ENCODE measurements at regions of chr4 and their contacts with region 1.

Region 1: DNA sequence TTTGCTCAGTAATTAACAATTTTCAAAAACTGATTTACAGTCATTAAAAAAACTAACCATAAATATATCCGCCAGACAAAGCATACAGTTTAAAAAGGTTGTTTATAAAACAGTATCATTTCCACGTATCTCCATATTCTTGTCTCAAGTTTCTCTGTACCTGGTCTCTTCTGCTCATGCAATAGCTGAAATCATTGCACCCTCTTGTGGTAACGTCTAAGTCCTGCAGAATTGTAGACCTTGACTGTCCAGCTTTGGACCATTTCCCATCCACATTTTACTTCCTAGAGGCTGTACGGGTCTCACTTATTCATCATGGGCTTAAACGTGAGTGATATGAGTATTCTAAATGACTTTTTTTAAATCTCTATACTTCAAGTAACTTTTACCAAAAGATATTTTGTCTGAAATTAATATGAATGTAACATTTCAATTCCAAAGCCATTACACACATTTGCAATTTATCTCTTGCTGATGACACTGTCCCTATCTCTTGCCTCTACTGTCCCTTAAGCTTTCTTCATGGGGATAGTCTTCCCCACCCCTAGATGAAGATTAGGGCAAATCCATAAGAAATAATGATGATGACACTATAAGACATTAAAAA is 118.5 kb downstream of the BTC start:
- DNase-seq: no peak
- H3K4me3 Mint-ChIP-seq: no peak overlapping the region
- H3K27ac Mint-ChIP-seq: no peak overlapping the region
- H3K4me1 Mint-ChIP-seq: peaks cover 2% of the 10 kb centered on the region
- H3K27me3 Mint-ChIP-seq: peaks cover 6% of the 10 kb centered on the region

Region 2: GRCh38 chr4:74320559-74321118 is 355.1 kb before region 1 on chr4:
- intact Hi-C with region 1: loop called (anchors 2 kb)
- DNase-seq: no peak
- H3K4me3 Mint-ChIP-seq: no peak overlapping the region
- H3K27ac Mint-ChIP-seq: no peak overlapping the region
- H3K4me1 Mint-ChIP-seq: peaks cover 4% of the 10 kb centered on the region
- H3K27me3 Mint-ChIP-seq: peaks cover 32% of the 10 kb centered on the region

Region 3: DNA sequence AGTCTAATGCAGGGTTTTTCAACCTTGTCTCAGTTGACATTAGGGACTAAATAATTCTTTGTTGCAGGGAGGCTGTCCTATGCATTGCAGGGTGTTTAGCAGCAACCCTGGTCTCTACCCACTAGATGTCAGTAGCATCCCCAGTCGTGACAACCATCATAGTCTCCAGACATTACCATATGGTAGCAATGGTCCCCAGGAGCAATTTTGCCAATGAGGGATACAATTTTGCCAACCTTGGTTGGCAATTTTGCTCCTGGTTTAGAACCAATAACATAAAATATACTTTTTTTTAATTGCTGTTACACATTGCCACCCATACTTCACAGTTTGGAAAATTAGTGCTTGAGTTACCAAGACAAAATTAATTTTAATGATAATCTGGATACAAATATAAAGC is 304.9 kb before region 1 on chr4:
- intact Hi-C with region 1: loop called (anchors 1 kb)
- DNase-seq: no peak
- H3K4me3 Mint-ChIP-seq: no peak overlapping the region
- H3K27ac Mint-ChIP-seq: no peak overlapping the region
- H3K4me1 Mint-ChIP-seq: peaks cover 6% of the 10 kb centered on the region
- H3K27me3 Mint-ChIP-seq: peaks cover 22% of the 10 kb centered on the region

Region 4: GRCh38 chr4:74623041-74623440 is 52.7 kb before region 1 on chr4:
- intact Hi-C with region 1: loop called (anchors 5 kb)
- DNase-seq: no peak
- H3K4me3 Mint-ChIP-seq: no peak overlapping the region
- H3K27ac Mint-ChIP-seq: no peak overlapping the region
- H3K4me1 Mint-ChIP-seq: peaks cover 26% of the 10 kb centered on the region
- H3K27me3 Mint-ChIP-seq: peaks cover 2% of the 10 kb centered on the region

Region 5: GRCh38 chr4:74733756-74734155 is 58.0 kb after region 1 on chr4:
- intact Hi-C with region 1: no loop called
- DNase-seq: no peak
- H3K4me3 Mint-ChIP-seq: no peak overlapping the region
- H3K27ac Mint-ChIP-seq: no peak overlapping the region
- H3K4me1 Mint-ChIP-seq: no peaks in the 10 kb centered on the region
- H3K27me3 Mint-ChIP-seq: no peaks in the 10 kb centered on the region

Measured in activated T-helper 2 cell treated with anti-CD3 and anti-CD28 coated beads, Interferon-gamma antibody, Interleukin-2, Interleukin-4, amounts not matched to agents 10 μg/mL and 5 μg/mL and 100 μg/mL, durations not matched to agents 14 hours and 24 hours and 36 hours (primary cell).